Heart right ventricle (tissue), 16 donors: ENCODE measurements at regions of chr17 and their contacts with region 1.

Region 1: GRCh38 chr17:37406635-37407461 is at the starts of genes ACACA and TADA2A:
- DNase-seq: peak; percentile 72 to 81
- ATAC-seq: peak; percentile 95 to 97 (median 96)
- H3K4me3 ChIP-seq: peak within 1 kb of the TSS; percentile 43 to 96 (median 74)
- H3K27ac ChIP-seq: peak within 1 kb of the TSS; percentile 80 to 96 (median 91)
- H3K4me1 ChIP-seq: peaks cover 0 to 29% (median 14%) of the 10 kb centered on the region in 9 donors
- H3K27me3 ChIP-seq: no peaks in the 10 kb centered on the region
- CTCF ChIP-seq: no peak
- total RNA-seq, gene ACACA: 14.7 to 28.0 (median 17.3) TPM
- total RNA-seq, gene TADA2A: 11.3 to 18.4 (median 13.4) TPM

Region 2: GRCh38 chr17:37358830-37359681 is 47.8 kb before region 1 on chr17:
- intact Hi-C with region 1: loop called in 1 of 10 experiments (anchors 5 kb)
- DNase-seq: peak; percentile 93 to 95
- ATAC-seq: peak; percentile 93 to 99 (median 96)
- H3K4me3 ChIP-seq: peak overlapping the region; percentile 45 to 94 (median 86)
- H3K27ac ChIP-seq: peak overlapping the region; percentile 39 to 95 (median 88)
- H3K4me1 ChIP-seq: peaks cover 0 to 28% (median 22%) of the 10 kb centered on the region in 9 donors
- H3K27me3 ChIP-seq: no peaks in the 10 kb centered on the region
- CTCF ChIP-seq: peak in 8 of 9 donors; percentile 24 to 68 (median 37)

Region 3: DNA sequence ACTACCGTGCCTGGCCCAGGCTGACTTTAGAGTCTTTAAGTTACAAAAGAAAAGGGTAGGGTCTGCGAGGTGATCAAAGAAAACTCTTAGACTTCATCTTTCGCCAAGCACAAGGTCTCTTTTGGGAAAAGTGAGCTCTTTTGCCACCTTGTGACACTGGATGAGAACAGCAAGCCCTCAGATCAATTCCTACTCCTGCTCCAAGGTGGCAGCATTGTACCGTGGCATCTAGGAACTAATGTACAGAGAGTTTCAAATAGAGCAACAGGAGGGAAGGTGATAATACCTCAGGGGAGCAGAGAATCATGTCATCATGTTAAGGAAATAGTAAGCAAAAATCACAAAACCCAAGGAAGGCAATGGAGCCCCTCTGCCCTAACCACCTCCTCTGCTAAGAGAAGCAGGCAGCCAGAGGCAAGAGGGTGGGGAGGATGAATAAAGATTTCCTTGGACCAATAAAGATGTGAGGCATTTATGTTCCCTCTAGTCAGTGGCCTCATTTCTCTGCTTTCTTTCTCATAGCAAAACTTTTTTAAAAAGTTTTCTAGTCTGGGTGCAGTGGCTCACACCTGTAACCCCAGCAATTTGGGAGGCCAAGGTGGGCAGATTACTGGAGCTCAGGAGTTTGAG is 33.2 kb before region 1 on chr17:
- intact Hi-C with region 1: loop called in 1 of 10 experiments (anchors 5 kb)
- DNase-seq: peak in 1 of 2 donors; percentile 53
- ATAC-seq: peak; percentile 72 to 90 (median 84)
- H3K4me3 ChIP-seq: no peak overlapping the region
- H3K27ac ChIP-seq: no peak overlapping the region
- H3K4me1 ChIP-seq: peaks cover 0 to 2% (median 0%) of the 10 kb centered on the region in 9 donors
- H3K27me3 ChIP-seq: no peaks in the 10 kb centered on the region
- CTCF ChIP-seq: peak; percentile 64 to 96 (median 89)

Region 4: DNA sequence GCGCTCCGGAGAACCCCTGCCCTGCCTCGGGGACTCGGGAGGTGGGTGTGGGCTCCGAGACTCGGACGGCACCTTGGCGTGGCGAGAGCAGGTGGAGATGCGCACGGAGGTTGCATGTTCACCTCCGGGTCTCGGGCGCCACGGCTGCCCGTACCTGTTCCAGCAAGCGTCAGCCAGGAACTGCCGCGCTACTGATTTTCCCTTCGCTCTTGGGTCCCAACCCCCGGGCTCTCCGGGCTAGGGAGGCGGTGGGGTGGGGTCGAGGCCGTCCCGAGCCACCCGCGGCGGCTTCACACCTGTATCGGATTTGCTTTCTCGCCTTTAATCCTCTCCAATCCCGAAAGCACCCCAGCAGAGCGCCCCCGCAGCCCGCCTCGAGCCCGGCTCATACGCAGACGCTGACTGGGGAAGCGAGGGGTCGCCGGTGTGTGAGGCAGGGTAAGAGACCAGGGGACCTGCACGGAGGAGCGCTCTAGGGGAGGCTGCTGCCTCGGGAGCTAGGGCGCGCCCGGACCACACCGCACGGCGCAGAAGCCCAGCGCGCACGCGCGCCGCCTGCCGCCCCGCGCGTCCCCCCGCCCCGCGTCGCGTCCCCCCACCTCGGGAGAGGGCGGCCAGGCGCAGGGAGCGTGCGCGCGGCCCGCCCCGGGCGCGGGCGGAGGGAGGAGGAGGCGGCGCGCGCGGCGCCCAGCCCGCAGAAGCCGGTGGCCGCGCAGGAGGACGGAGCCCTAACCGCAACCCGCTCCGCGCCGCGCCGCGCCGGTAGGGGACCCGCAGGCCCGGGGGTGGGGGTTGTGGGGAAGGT is 82.6 kb after region 1 on chr17 and contains the start of gene DUSP14:
- intact Hi-C with region 1: loop called in 2 of 10 experiments (anchors 2 to 10 kb)
- DNase-seq: peak; percentile 73 to 86
- ATAC-seq: peak; percentile 80 to 95 (median 87)
- H3K4me3 ChIP-seq: peak within 1 kb of the TSS; percentile 71 to 99 (median 86)
- H3K27ac ChIP-seq: peak within 1 kb of the TSS; percentile 69 to 94 (median 90)
- H3K4me1 ChIP-seq: peaks cover 0 to 44% (median 40%) of the 10 kb centered on the region in 9 donors
- H3K27me3 ChIP-seq: peaks cover 0 to 24% (median 0%) of the 10 kb centered on the region in 7 donors
- CTCF ChIP-seq: no peak
- total RNA-seq, gene DUSP14: 12.6 to 21.7 (median 18.5) TPM